ENCODE measurements at regions of chr6 and their contacts with region 1.

Region 1: GRCh38 chr6:139134817-139135581 is at the start of gene HECA:
- DNase-seq: peak; percentile 99
- H3K4me3 Mint-ChIP-seq: peak within 1 kb of the TSS; percentile 83
- H3K27ac Mint-ChIP-seq: peak within 1 kb of the TSS; percentile 94
- H3K4me1 Mint-ChIP-seq: peaks cover 54% of the 10 kb centered on the region
- H3K27me3 Mint-ChIP-seq: no peaks in the 10 kb centered on the region
- total RNA-seq, gene HECA: 75.7 to 76.6 TPM

Region 2: DNA sequence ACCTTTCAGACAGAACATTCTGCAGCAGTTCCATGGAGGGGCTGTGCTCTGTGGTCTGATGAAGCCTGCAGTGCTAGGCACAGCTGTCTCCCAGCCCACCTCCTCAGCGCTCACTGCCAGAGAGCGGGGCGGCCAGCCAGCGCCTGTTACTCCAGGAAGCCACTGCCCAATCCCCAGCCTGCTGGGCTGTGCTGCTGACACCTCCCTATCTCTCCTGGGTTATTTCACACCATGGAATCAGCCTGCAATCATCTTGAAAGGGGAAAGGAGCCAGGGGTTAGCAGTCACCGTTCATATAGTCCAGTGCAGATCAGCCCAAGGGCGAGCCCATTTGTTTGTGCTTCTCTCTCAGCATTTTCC is 589.4 kb before region 1 on chr6:
- CTCF ChIA-PET with region 1: no interaction called
- POLR2A ChIA-PET with region 1: no interaction called
- intact Hi-C with region 1: no loop called
- DNase-seq: no peak
- H3K4me3 Mint-ChIP-seq: no peak overlapping the region
- H3K27ac Mint-ChIP-seq: no peak overlapping the region
- H3K4me1 Mint-ChIP-seq: peaks cover 5% of the 10 kb centered on the region
- H3K27me3 Mint-ChIP-seq: peaks cover 15% of the 10 kb centered on the region

Region 3: GRCh38 chr6:139146317-139146726 is 11.3 kb after region 1 on chr6:
- CTCF ChIA-PET with region 1: interaction called, 8 read pairs
- POLR2A ChIA-PET with region 1: interaction called, 128 read pairs
- intact Hi-C with region 1: loop called (anchors 1 kb)
- DNase-seq: peak; percentile 59
- H3K4me3 Mint-ChIP-seq: peak overlapping the region; percentile 72
- H3K27ac Mint-ChIP-seq: peak overlapping the region; percentile 99
- H3K4me1 Mint-ChIP-seq: peaks cover 94% of the 10 kb centered on the region
- H3K27me3 Mint-ChIP-seq: no peaks in the 10 kb centered on the region

Region 4: GRCh38 chr6:139161817-139162284 is 26.9 kb after region 1 on chr6:
- CTCF ChIA-PET with region 1: interaction called, 5 read pairs
- POLR2A ChIA-PET with region 1: interaction called, 7 read pairs
- intact Hi-C with region 1: loop called (anchors 1 kb)
- DNase-seq: peak; percentile 88
- H3K4me3 Mint-ChIP-seq: peak overlapping the region; percentile 61
- H3K27ac Mint-ChIP-seq: peak overlapping the region; percentile 96
- H3K4me1 Mint-ChIP-seq: peaks cover 92% of the 10 kb centered on the region
- H3K27me3 Mint-ChIP-seq: no peaks in the 10 kb centered on the region

Region 5: GRCh38 chr6:139364302-139364981 is 229.4 kb after region 1 on chr6:
- CTCF ChIA-PET with region 1: interaction called, 10 read pairs
- POLR2A ChIA-PET with region 1: no interaction called
- intact Hi-C with region 1: no loop called
- DNase-seq: no peak
- H3K4me3 Mint-ChIP-seq: no peak overlapping the region
- H3K27ac Mint-ChIP-seq: no peak overlapping the region
- H3K4me1 Mint-ChIP-seq: peaks cover 27% of the 10 kb centered on the region
- H3K27me3 Mint-ChIP-seq: no peaks in the 10 kb centered on the region

Measured in activated CD4-positive, alpha-beta memory T cell treated with anti-CD3 and anti-CD28 coated beads for 36 hours (primary cell).